Mammary epithelial cell (primary cell): ENCODE measurements at regions of chr2 and their contacts with region 1.

Region 1: DNA sequence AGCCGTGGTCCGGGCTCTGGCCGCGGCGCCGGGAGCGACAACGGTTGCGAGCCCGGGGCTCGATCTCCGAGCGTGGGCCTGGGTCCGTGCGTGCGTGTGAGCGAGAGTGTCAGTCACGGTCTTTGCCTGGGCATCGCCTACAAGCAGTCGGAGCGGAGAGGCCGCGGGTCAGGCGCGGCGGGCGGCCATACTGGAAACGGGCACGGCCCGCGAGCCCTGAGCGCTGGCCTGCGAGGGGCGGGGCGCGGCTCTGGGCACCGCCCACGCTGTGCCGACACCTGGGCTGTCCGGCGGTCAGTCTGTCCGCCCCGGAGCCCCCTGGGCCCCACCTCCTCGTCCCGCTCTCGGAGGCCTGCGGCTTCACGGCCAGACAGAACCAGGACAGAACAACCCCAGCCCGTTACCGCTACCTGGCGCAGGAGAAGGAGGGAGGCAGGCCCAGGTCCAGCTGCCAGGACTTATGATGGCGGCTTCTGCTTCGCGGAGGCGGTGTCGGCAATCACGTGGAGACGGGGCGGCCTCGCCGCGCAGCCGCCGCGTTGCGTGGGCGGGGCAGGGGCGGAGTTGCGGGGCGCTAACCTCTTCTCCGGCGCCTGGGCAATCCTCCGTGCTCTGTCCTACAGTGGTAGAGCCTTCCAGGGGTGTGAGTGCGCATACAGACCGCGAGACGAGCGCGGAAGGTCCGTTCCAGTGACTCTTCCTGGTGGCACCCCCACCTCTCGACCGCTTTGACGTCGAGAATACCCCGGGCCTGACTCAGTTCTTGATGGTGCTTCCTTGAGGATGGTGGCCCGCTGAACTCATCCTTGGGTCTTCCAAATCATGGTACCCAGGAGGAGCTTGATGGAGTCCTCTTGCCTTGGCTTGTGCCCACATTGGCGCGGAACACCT is at the start of gene TMEM131:
- DNase-seq: peak; percentile 95
- H3K4me3 ChIP-seq: peak within 1 kb of the TSS; percentile 95 to 98 (median 97)
- H3K27ac ChIP-seq: peak within 1 kb of the TSS; percentile 91
- H3K4me1 ChIP-seq: peaks cover 22% of the 10 kb centered on the region
- H3K27me3 ChIP-seq: no peaks in the 10 kb centered on the region
- CTCF ChIP-seq: no peak
- total RNA-seq, gene TMEM131: 66.2 to 67.9 TPM

Region 2: DNA sequence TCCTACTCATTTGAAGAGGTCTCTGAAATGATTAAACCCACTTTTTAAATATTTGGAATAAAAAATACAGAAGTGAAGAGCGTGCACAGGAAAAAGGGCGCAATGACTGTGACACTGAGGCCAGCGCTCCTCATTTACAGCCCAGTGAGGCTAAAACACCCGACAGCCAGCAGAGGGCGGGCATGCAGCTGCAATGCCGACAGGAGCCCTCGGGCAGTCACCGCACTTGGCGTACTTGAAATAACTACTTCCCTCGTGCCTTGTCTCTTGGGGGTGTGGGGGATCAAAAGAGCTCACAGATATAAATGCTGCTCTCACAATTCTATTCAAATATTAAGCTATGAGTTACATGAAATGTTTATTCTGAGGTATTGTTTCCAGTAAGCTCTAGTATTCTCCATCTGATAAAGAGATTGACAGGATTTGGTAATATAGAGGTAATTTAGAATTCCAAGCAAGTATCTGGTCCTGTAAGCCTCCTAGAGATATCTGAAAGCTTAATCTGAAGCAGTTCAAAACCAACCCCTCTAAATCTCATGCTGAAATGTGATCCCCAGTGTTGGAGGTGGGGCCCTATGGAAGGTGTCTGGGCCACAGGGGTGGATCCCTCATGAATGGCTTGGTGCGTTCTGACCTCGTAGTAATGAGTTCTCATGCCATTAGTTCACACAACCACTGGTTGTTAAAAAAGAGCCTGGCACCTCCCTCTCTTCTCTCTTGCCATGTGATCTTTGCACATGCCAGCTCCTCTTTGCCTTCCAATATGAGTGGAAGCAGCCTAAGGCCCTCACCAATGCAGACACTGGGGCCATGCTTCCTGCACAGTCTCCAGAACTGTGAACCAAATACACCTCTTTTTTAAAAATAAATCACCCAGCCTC is 189.0 kb before region 1 on chr2:
- CTCF ChIA-PET with region 1: interaction called, 3 read pairs
- dilution Hi-C with region 1: no loop called
- in situ Hi-C with region 1: no loop called
- intact Hi-C with region 1: loop called (anchors 1 kb)
- DNase-seq: peak; percentile 45
- H3K4me3 ChIP-seq: no peak overlapping the region
- H3K27ac ChIP-seq: no peak overlapping the region
- H3K4me1 ChIP-seq: peaks cover 4% of the 10 kb centered on the region
- H3K27me3 ChIP-seq: no peaks in the 10 kb centered on the region
- CTCF ChIP-seq: peak; percentile 87 to 96

Region 3: DNA sequence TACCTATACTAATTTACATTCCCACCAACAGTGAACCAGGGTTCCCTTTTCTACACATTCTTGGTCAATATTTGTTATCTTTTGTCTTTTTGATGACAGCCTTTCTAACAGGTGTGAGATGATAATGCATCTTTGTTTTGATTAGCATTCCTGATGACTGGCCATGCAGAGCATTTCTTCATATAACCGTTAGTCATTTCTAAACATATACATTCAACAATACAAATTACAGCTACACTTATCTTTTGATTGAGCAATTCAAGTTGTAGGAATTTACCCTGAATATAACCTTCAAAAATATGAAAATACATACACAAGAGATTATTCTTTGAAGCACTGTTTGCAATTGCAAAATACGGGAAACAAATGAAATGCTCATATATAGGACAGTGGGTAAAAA is 95.2 kb before region 1 on chr2:
- CTCF ChIA-PET with region 1: no interaction called
- dilution Hi-C with region 1: no loop called
- in situ Hi-C with region 1: no loop called
- intact Hi-C with region 1: loop called (anchors 2 kb)
- DNase-seq: peak; percentile 40
- H3K4me3 ChIP-seq: no peak overlapping the region
- H3K27ac ChIP-seq: no peak overlapping the region
- H3K4me1 ChIP-seq: peaks cover 15% of the 10 kb centered on the region
- H3K27me3 ChIP-seq: no peaks in the 10 kb centered on the region
- CTCF ChIP-seq: no peak

Region 4: DNA sequence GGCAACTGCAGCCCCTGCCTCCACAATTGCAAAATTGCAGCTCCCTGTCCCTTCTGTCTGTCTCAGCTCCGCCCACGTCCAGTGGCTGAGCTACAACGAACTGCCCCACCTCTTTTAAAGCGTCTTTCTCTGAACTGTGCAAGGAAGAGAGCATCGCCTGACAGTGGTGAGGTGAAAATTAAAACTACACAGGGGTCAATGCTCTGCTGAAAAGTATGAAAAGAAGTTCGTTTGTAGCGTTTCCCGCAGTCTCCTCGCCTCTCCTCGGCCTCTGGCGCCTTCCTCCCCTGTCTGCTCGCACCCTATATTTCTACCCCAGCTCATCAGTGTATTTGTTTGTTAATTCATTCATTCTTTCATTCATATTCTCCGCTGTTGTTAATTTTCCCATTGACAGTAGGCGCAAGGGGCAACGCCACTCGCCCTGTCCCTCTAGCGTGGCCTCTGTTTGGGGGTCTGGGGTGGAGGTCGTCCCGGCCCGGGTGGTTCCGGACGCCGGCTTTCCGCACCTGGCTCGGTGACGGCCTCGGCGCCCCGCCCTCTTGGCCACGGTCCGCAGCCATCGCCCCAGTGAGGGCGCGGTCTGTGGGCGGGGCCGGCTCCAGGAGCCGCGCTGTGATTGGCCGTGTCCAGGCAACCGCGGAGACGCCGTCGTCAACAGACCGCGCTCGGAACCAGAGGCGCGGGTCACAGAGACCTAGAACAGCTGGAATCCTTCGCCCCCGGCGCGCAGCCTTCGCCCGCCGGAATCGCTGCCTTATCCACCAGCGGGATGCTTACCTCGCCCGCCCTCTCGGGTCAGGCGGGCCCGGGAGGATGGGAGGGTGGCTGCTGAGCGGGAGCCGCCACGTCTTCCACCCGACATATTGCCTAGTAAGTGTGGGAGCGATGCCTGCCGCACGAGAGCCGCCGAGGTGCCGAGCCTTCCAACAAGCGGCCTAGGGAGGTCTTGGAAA is 90.8 kb after region 1 on chr2 and contains the start of gene VWA3B:
- CTCF ChIA-PET with region 1: no interaction called
- dilution Hi-C with region 1: no loop called
- in situ Hi-C with region 1: no loop called
- intact Hi-C with region 1: loop called (anchors 2 kb)
- DNase-seq: peak; percentile 78
- H3K4me3 ChIP-seq: peak within 1 kb of the TSS; percentile 60 to 87 (median 73)
- H3K27ac ChIP-seq: peak within 1 kb of the TSS; percentile 91
- H3K4me1 ChIP-seq: peaks cover 10% of the 10 kb centered on the region
- H3K27me3 ChIP-seq: no peaks in the 10 kb centered on the region
- CTCF ChIP-seq: no peak
- total RNA-seq, gene VWA3B: 0.66 TPM in 1 of 2 donors, not detected in the other

Region 5: GRCh38 chr2:98175811-98176210 is 179.8 kb after region 1 on chr2:
- CTCF ChIA-PET with region 1: no interaction called
- dilution Hi-C with region 1: no loop called
- in situ Hi-C with region 1: loop called in 1 of 2 experiments (anchors 25 kb)
- intact Hi-C with region 1: loop called (anchors 1 kb)
- DNase-seq: no peak
- H3K4me3 ChIP-seq: no peak overlapping the region
- H3K27ac ChIP-seq: no peak overlapping the region
- H3K4me1 ChIP-seq: peaks cover 22% of the 10 kb centered on the region
- H3K27me3 ChIP-seq: no peaks in the 10 kb centered on the region
- CTCF ChIP-seq: peak in 1 of 2 donors; percentile 19

Region 6: GRCh38 chr2:98404556-98405220 is 408.7 kb after region 1 on chr2:
- CTCF ChIA-PET with region 1: no interaction called
- dilution Hi-C with region 1: no loop called
- in situ Hi-C with region 1: no loop called
- intact Hi-C with region 1: no loop called
- DNase-seq: peak; percentile 44
- H3K4me3 ChIP-seq: no peak overlapping the region
- H3K27ac ChIP-seq: no peak overlapping the region
- H3K4me1 ChIP-seq: no peaks in the 10 kb centered on the region
- H3K27me3 ChIP-seq: peaks cover 6% of the 10 kb centered on the region
- CTCF ChIP-seq: no peak